ENCODE measurements at regions of chr4 and their contacts with region 1.

Region 1: DNA sequence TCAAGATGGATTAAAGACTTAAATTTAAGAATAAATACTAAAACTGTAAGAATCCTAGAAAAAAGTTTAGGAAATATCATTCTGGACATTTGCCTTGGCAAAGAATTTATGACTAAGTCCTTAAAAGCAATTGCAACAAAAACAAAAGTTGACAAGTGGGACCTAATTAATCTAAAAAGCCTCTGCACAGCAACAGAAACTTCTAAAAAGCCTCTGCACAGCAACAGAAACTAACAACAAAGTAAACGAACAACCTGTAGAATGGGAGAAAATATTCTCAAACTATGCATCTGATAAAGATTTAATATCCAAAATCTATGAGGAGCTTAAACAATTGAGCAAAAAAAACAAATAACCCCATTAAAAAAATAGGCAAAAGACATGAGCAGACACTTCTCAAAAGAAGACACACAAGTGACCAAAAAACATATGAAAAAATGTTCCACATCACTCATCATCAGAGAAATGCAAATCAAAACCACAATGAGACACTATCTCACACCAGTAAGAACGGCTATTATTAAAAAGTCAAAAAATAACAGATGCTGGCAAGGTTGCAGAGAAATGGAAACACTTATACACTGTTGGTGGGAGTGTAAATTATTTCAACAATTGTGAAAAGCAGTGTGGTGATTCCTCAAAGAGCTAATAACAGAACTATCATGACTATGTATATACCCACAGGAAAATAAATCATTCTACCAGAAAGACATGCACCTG is 5.5 kb upstream of the OPRPN start:
- DNase-seq: no peak

Region 2: GRCh38 chr4:71732706-71733105 is 1340.5 kb after region 1 on chr4:
- intact Hi-C with region 1: loop called in 1 of 2 experiments (anchors 5 kb)
- DNase-seq: no peak